ENCODE measurements at regions of chrX and their contacts with region 1.

Region 1: GRCh38 chrX:87339958-87340357 is 177.6 kb upstream of the KLHL4 start:
- DNase-seq: no peak

Region 2: DNA sequence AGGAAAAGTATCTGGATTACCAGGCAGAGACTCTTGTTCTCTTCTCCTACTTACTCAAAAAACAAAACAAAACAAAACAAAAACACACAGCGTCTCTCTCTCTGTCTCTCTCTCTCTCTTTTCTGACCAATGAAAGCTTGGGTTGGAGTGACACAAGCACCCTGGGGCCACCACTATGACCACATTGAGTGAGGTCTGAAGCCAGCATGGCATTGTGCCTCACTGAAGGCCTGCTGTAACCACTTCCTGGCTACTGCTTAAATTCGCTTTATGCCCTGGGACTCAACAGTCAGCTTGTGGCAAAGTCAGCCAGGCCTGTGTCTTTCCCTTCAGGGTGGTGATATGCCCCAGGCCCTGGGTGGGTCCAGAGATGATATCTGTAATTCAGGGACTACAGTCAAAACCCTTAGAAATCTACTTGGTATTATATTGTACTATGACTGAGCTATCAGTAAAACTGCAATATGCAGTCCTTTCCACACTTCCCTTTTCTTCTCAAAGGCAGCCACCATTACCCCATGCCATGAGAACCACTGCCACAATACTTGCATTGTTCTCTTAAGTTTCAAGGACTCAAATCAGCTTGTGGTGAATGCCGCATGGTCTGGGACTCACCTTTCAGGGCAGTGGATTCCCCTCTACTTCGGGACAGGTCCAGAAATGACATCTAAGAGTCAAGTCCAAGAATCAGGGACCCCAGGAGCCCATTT is 429.2 kb before region 1 on chrX:
- intact Hi-C with region 1: no loop called
- DNase-seq: no peak

Region 3: GRCh38 chrX:87679849-87680248 is 339.9 kb after region 1 on chrX:
- intact Hi-C with region 1: loop called (anchors 10 kb)
- DNase-seq: no peak